Esophagus squamous epithelium (tissue), 5 donors: ENCODE measurements at regions of chr9 and their contacts with region 1.

Region 1: DNA sequence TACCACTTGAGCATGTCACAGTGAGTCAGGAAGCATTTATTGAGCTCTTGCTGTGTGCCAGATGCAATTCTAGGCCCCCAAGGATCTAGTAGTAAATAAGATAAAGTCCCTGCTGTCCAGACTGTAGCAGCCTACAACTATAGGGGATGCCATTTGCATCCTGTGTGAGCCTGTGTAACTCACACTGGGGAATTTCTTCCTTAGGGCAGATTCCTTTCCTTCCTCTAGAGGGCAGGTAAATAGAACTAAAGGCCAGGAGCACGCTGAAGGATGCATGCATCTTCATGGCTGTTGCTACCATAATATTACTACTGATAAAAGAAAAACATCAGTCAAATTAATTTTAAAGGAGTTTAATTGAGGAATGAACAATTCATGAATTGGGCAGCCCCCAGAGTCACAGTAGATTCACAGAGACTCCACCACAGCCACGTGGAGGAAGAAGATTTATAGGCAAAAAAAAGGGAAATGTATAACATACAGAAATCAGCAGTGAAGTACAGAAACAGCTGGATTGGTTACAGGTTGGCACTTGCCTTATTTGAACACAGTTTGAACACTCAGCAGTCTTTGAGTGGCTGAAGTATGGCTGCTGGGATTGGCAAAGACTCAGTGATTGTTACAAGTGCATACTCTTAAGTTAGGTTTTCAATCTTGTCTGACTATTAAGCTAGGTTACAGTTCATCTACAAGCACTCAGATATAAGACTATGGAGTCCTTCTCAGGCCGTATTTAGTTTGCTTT is 98.9 kb downstream of the ACTL7B start:
- DNase-seq: no peak
- H3K4me3 ChIP-seq: no peak overlapping the region
- H3K27ac ChIP-seq: peak overlapping the region in 3 of 4 donors; percentile 43 to 76 (median 59)
- H3K4me1 ChIP-seq: peaks cover 8 to 45% (median 9%) of the 10 kb centered on the region in 3 donors
- H3K27me3 ChIP-seq: no peaks in the 10 kb centered on the region
- CTCF ChIP-seq: peak in 4 of 6 experiments; percentile 11 to 59 (median 41)
- POLR2A ChIP-seq: no peak

Region 2: DNA sequence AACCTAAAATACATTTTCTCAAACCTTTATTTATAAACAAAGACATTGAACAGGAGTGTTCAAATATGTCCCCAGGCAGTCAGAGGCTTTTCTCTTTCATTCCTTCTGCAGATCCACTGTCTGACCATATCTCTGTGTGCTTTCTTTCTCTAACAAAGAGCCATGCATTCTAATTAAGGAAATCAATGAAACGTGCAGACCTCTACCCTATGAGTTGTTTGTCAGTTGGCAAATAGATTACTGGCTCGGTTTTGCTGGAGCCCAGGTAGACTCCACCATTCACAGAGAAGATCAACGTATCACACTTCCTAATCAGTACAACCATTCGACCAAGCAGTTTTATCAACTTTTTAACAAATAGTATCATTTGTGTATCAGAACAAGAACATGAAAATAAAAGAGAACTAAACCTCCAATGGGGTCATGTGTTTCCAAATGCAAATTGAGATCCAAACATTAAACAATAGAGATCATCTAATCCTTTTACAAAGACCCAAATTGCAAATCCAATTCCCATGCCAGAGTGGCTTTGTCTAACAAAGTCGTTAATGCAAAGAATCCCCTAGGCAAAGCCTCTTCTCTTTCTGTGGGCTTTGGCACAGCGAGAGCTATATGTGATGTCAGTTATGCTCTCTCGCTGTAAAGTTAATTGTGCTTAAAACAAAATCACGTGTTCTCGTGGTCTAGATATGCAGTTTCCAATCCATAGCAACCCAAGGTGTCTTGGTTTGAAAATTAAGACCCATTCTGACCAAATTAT is 1284.2 kb before region 1 on chr9:
- intact Hi-C with region 1: loop called (anchors 10 kb)
- DNase-seq: no peak
- H3K4me3 ChIP-seq: no peak overlapping the region
- H3K27ac ChIP-seq: no peak overlapping the region
- H3K4me1 ChIP-seq: no peaks in the 10 kb centered on the region
- H3K27me3 ChIP-seq: no peaks in the 10 kb centered on the region
- CTCF ChIP-seq: no peak
- POLR2A ChIP-seq: no peak